ENCODE measurements at regions of chr7 and their contacts with region 1.

Region 1: GRCh38 chr7:132933072-132933458 is 148.8 kb downstream of the CHCHD3 start:
- DNase-seq: no peak
- ATAC-seq: peak; percentile 70
- H3K4me3 ChIP-seq: no peak overlapping the region
- H3K27ac ChIP-seq: no peak overlapping the region
- H3K4me1 ChIP-seq: peaks cover 17% of the 10 kb centered on the region
- H3K27me3 ChIP-seq: no peaks in the 10 kb centered on the region
- CTCF ChIP-seq: no peak
- EP300 ChIP-seq: no peak
- POLR2A ChIP-seq: no peak
- RAD21 ChIP-seq: no peak

Region 2: GRCh38 chr7:132915647-132916046 is 17.4 kb before region 1 on chr7:
- CTCF ChIA-PET with region 1: no interaction called
- POLR2A ChIA-PET with region 1: interaction called, 10 read pairs
- RAD21 ChIA-PET with region 1: no interaction called
- SMC1A ChIA-PET with region 1: no interaction called
- in situ Hi-C with region 1: no loop called
- intact Hi-C with region 1: no loop called
- DNase-seq: no peak
- ATAC-seq: no peak
- H3K4me3 ChIP-seq: no peak overlapping the region
- H3K27ac ChIP-seq: no peak overlapping the region
- H3K4me1 ChIP-seq: no peaks in the 10 kb centered on the region
- H3K27me3 ChIP-seq: no peaks in the 10 kb centered on the region
- CTCF ChIP-seq: no peak
- EP300 ChIP-seq: no peak
- POLR2A ChIP-seq: no peak
- RAD21 ChIP-seq: no peak

Measured in GM12878 (cell line).